ENCODE measurements at regions of chr3 and their contacts with region 1.

Region 1: DNA sequence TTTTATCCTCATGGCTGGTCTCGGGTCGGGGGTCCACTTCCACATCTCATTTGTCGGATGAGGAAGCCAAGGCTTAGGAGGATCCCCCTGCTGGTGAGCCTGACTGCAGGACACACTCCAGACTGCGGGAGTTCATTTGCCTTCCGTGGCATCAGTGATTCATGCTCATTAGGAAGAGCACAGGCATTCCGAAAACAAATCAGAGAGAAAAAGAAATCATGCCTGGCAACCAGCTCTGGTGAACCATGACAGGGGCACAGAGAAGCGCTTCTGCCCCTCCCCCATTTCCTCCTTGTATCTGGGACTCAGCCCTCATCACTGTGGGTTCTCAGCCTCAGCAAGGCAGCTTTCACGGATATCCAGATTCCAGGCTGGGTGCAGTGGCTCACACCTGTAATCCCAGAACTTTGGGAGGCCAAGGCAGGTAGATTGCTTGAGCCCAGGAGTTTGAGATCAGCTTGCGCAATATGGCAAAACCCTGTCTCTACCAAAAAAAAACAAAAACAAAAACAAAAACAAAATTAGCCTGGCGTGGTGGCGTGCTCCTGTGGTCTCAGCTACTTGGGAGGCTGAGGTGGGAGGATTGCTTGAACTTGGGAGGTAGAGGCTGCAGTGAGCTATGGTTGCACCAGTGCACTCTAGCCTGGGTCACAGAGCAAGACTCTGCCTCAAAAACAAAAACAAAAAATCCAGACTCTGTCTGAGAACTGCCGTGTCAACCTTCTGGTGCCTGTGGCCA is 28.4 kb downstream of the IRAK2 start:
- DNase-seq: peak; percentile 89
- H3K4me3 ChIP-seq: no peak overlapping the region
- CTCF ChIP-seq: peak; percentile 87

Region 2: GRCh38 chr3:10164546-10165393 is 28.4 kb before region 1 on chr3 and contains the start of gene IRAK2:
- CTCF ChIA-PET with region 1: interaction called, 16 read pairs
- POLR2A ChIA-PET with region 1: interaction called, 4 read pairs
- DNase-seq: no peak
- H3K4me3 ChIP-seq: peak within 1 kb of the TSS; percentile 94
- CTCF ChIP-seq: peak; percentile 78

Region 3: DNA sequence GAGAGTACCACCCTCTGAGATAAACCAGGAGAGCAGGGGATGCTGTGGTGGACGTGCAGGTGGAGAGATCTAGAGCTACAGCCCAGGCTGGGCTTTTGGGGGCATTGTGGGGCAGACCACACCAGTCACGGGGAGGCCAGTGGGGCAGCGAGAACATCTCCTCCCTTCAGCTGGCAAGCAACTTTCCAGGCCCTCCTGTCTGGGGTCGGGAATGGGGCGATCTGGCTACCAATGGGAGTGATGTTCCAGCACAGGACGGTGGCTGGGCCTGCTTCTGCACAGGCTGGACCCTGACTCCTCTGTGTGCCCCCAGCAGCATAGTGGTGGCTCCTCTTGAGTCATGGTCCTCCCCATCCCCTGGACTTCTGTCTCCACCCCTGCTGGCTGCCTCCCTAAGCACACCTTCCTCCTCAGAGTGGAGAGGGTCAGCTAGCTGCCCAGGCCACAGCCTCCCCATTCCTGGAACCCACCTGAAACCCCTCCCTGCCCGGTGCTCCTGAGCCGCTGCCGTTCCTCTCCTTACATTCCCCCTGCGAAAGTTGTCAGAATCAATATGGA is 12.3 kb before region 1 on chr3:
- CTCF ChIA-PET with region 1: interaction called, 24 read pairs
- POLR2A ChIA-PET with region 1: interaction called, 3 read pairs
- DNase-seq: no peak
- H3K4me3 ChIP-seq: no peak overlapping the region
- CTCF ChIP-seq: no peak

Region 4: GRCh38 chr3:10205451-10206165 is 12.5 kb after region 1 on chr3:
- CTCF ChIA-PET with region 1: interaction called, 68 read pairs
- POLR2A ChIA-PET with region 1: interaction called, 4 read pairs
- DNase-seq: no peak
- H3K4me3 ChIP-seq: no peak overlapping the region
- CTCF ChIP-seq: no peak